Heart left ventricle (tissue), 16 donors: ENCODE measurements at regions of chr17 and their contacts with region 1.

Region 1: GRCh38 chr17:75632863-75633485 is at the start of gene SMIM5:
- DNase-seq: peak; percentile 86 to 93 (median 90)
- ATAC-seq: peak; percentile 52 to 77 (median 68)
- H3K4me3 ChIP-seq: peak within 1 kb of the TSS in 10 of 12 donors; percentile 5 to 39 (median 26)
- H3K27ac ChIP-seq: peak within 1 kb of the TSS; percentile 58 to 95 (median 85)
- H3K4me1 ChIP-seq: peaks cover 13 to 58% (median 25%) of the 10 kb centered on the region in 12 donors
- H3K27me3 ChIP-seq: no peaks in the 10 kb centered on the region
- CTCF ChIP-seq: peak; percentile 93 to 100 (median 98)
- POLR2A ChIP-seq: no peak
- total RNA-seq, gene SMIM5: 1.8 to 18.2 (median 6.8) TPM

Region 2: DNA sequence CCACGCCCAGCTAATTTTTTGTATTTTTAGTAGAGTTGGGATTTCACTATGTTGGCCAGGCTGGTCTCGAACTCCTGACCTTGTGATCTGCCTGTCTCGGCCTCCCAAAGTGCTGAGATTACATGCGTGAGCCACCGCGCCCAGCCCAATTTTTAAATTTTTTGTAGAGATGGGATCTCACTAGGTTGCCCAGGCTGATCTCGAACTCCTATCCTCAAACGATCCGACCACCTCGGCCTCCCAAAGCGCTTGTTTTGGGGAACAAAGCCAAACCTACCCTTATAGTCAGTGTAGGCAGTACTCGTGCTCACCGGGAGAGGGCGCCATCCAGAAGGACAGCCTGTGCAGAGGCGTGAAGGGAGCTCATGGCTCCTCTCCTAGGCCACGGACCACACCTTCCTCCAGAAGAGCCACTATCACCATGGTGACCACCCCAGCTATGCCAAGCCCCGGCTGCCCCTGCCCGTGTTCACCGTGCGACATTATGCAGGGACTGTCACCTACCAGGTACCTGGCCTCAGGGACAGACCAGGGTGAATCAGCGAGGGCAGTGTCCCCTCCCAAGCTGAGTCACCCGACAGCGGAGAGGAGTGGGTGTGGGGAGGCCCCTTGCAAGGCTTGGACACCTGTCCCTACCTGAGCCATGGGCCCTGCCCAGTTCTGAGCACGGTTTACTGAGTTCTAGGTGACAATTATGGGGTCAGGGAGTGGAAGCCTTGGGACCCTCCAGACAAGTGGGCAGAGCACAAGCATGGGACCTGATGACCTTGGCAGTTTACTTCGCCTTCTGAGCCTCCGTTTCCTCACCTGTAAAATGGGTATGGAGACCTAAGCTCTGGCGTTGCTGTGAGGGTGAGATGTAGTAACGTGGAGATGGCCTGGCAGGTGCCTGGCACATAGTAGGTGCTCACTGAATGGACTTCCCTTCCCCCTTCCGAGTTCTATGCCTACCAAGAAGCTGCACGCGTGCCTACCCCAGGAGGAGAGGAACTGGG is 31.6 kb before region 1 on chr17:
- intact Hi-C with region 1: no loop called
- DNase-seq: peak in 3 of 5 donors; percentile 8 to 77 (median 29)
- ATAC-seq: peak; percentile 34 to 56 (median 52)
- H3K4me3 ChIP-seq: no peak overlapping the region
- H3K27ac ChIP-seq: no peak overlapping the region
- H3K4me1 ChIP-seq: peaks cover 0 to 6% (median 0%) of the 10 kb centered on the region in 12 donors
- H3K27me3 ChIP-seq: no peaks in the 10 kb centered on the region
- CTCF ChIP-seq: peak; percentile 45 to 67 (median 60)
- POLR2A ChIP-seq: no peak

Region 3: GRCh38 chr17:75652915-75653549 is 20.1 kb after region 1 on chr17:
- intact Hi-C with region 1: loop called in 3 of 10 experiments (anchors 1 to 2 kb)
- DNase-seq: no peak
- ATAC-seq: peak in 3 of 4 donors; percentile 66 to 79 (median 68)
- H3K4me3 ChIP-seq: no peak overlapping the region
- H3K27ac ChIP-seq: no peak overlapping the region
- H3K4me1 ChIP-seq: peaks cover 0 to 4% (median 0%) of the 10 kb centered on the region in 12 donors
- H3K27me3 ChIP-seq: no peaks in the 10 kb centered on the region
- CTCF ChIP-seq: peak; percentile 50 to 73 (median 60)
- POLR2A ChIP-seq: no peak

Region 4: GRCh38 chr17:75679706-75680442 is 46.9 kb after region 1 on chr17:
- intact Hi-C with region 1: no loop called
- DNase-seq: peak in 3 of 5 donors; percentile 42 to 50 (median 50)
- ATAC-seq: peak in 3 of 4 donors; percentile 69 to 86 (median 84)
- H3K4me3 ChIP-seq: no peak overlapping the region
- H3K27ac ChIP-seq: peak overlapping the region; percentile 16 to 74 (median 64)
- H3K4me1 ChIP-seq: peaks cover 0 to 46% (median 33%) of the 10 kb centered on the region in 12 donors
- H3K27me3 ChIP-seq: no peaks in the 10 kb centered on the region
- CTCF ChIP-seq: peak in 10 of 12 donors; percentile 15 to 55 (median 38)
- POLR2A ChIP-seq: no peak